K562 (cell line): ENCODE measurements at regions of chr21 and their contacts with region 1.

Region 1: DNA sequence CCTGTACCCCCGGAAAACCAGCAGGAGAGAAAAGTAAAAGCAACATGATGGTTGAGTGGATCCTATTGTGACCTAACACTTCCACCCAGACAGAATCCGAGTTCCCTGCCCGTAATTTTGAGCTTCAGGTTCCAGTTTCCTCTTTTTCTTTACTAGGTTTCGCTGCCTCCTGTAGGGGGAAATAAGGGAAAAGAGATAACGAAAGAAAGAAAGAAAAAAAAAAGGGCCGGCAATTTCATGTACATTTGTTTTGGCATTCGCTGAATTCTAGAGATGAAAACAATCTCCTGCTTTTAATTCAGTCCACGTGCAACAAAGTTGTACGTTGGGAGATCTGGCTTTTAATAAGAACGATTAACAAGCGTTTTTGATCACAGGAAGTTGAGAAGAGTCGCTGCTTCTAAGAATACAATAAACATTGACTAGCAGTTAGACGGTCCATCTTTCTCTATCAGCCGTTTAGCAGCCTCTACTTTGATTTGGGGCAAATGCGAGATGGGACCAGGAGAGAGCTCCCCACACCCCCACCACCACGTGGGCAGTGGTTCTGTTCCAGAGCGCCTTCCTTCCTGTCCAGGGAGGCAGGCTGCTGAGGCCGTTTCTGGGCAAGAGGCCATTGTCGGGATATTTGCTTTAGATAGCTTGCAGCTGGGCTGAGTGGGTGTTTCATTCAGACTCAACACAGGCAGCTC is 155.9 kb upstream of the RUNX1 start:
- DNase-seq: peak; percentile 69 to 85 (median 73)
- ATAC-seq: peak; percentile 75
- H3K4me3 ChIP-seq: peak overlapping the region; percentile 18
- H3K27ac ChIP-seq: peak overlapping the region; percentile 85
- H3K4me1 ChIP-seq: peaks cover 24 to 48% of the 10 kb centered on the region in 2 experiments
- H3K27me3 ChIP-seq: no peaks in the 10 kb centered on the region
- CTCF ChIP-seq: peak; percentile 26 to 52 (median 42); a peak in 4 of 6 replicates
- EP300 ChIP-seq: no peak; the same call in 1 of the 2 replicates
- POLR2A ChIP-seq: no peak; the same call in 1 of the 2 replicates
- RAD21 ChIP-seq: peak; percentile 56 to 62

Region 2: GRCh38 chr21:35102488-35103371 is 102.3 kb before region 1 on chr21:
- CTCF ChIA-PET with region 1: no interaction called
- POLR2A ChIA-PET with region 1: no interaction called
- in situ Hi-C with region 1: no loop called
- intact Hi-C with region 1: loop called (anchors 2 kb)
- DNase-seq: peak; percentile 39 to 82 (median 58)
- ATAC-seq: peak; percentile 50
- H3K4me3 ChIP-seq: no peak overlapping the region
- H3K27ac ChIP-seq: peak overlapping the region; percentile 70
- H3K4me1 ChIP-seq: peaks cover 37 to 77% of the 10 kb centered on the region in 2 experiments
- H3K27me3 ChIP-seq: no peaks in the 10 kb centered on the region
- CTCF ChIP-seq: no peak
- EP300 ChIP-seq: peak; percentile 5; the same call in 1 of the 2 replicates
- POLR2A ChIP-seq: no peak
- RAD21 ChIP-seq: no peak; a peak in 1 of 4 replicates

Region 3: GRCh38 chr21:35217504-35218060 is 12.6 kb after region 1 on chr21:
- CTCF ChIA-PET with region 1: no interaction called
- POLR2A ChIA-PET with region 1: interaction called, 11 read pairs
- in situ Hi-C with region 1: no loop called
- intact Hi-C with region 1: no loop called
- DNase-seq: no peak
- ATAC-seq: peak; percentile 87
- H3K4me3 ChIP-seq: no peak overlapping the region
- H3K27ac ChIP-seq: no peak overlapping the region
- H3K4me1 ChIP-seq: peaks cover 0 to 6% of the 10 kb centered on the region in 2 experiments; a peak in 1 of 5 replicates
- H3K27me3 ChIP-seq: no peaks in the 10 kb centered on the region
- CTCF ChIP-seq: no peak
- EP300 ChIP-seq: no peak; the same call in 1 of the 2 replicates
- POLR2A ChIP-seq: no peak
- RAD21 ChIP-seq: peak in 1 of 2 experiments; percentile 46; a peak in 2 of 4 replicates

Region 4: GRCh38 chr21:35400233-35400957 is 195.4 kb after region 1 on chr21:
- CTCF ChIA-PET with region 1: no interaction called
- POLR2A ChIA-PET with region 1: no interaction called
- in situ Hi-C with region 1: no loop called
- intact Hi-C with region 1: loop called (anchors 5 kb)
- DNase-seq: peak; percentile 18 to 79 (median 38)
- ATAC-seq: peak; percentile 92
- H3K4me3 ChIP-seq: no peak overlapping the region
- H3K27ac ChIP-seq: no peak overlapping the region
- H3K4me1 ChIP-seq: peaks cover 0 to 15% of the 10 kb centered on the region in 2 experiments; a peak in 3 of 5 replicates
- H3K27me3 ChIP-seq: no peaks in the 10 kb centered on the region; a peak in 2 of 5 replicates
- CTCF ChIP-seq: peak; percentile 53 to 82 (median 70)
- EP300 ChIP-seq: peak; percentile 48; the same call in 1 of the 2 replicates
- POLR2A ChIP-seq: no peak
- RAD21 ChIP-seq: peak; percentile 97 to 98